Activated CD4-positive, alpha-beta memory T cell treated with anti-CD3 and anti-CD28 coated beads for 36 hours (primary cell): ENCODE measurements at regions of chr2 and their contacts with region 1.

Region 1: DNA sequence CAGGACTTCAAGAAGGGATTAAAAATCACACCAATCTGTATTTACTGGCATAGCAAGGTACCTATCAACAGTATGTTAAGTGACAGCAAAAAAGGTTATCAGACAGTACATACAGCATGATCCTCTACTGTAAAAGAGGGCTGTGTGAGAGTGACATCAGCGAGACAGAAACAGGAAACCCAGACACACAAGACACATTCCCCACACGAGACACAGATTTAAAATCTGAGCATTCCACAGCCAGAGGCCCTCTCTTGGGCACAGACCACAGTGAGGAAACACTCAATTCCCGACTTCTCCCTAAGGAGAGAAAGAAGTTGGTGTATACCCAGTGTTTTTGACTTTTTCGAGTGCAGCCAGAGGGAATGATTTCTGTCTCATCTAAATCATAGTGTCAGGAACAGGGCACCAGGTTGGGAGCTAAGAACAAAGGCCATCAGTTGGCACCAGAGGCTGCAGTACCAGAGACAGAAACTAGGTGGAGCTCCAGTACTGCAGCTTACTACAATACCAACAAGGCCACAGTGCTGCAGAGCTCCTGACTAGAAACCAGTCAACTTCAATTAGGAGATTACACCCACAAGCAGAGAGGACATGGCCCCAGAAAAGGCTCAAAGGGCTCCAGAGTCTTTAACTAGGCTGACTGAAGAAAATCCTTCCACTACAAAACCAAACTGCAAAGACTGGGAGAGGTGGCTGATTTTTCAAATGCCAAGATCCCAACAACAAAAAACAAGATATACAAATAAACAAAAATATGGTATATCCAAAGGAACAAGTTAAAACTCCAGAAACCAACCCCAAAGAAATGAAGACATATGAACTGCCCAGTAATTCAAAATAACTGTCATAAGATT is 41.0 kb downstream of the UNC50 start:
- DNase-seq: peak; percentile 87
- H3K4me3 Mint-ChIP-seq: no peak overlapping the region
- H3K27ac Mint-ChIP-seq: peak overlapping the region; percentile 74
- H3K4me1 Mint-ChIP-seq: peaks cover 52% of the 10 kb centered on the region
- H3K27me3 Mint-ChIP-seq: no peaks in the 10 kb centered on the region

Region 2: GRCh38 chr2:98713332-98714015 is 64.1 kb after region 1 on chr2:
- CTCF ChIA-PET with region 1: interaction called, 11 read pairs
- POLR2A ChIA-PET with region 1: no interaction called
- intact Hi-C with region 1: no loop called
- DNase-seq: no peak
- H3K4me3 Mint-ChIP-seq: no peak overlapping the region
- H3K27ac Mint-ChIP-seq: peak overlapping the region; percentile 24
- H3K4me1 Mint-ChIP-seq: peaks cover 88% of the 10 kb centered on the region
- H3K27me3 Mint-ChIP-seq: no peaks in the 10 kb centered on the region

Region 3: DNA sequence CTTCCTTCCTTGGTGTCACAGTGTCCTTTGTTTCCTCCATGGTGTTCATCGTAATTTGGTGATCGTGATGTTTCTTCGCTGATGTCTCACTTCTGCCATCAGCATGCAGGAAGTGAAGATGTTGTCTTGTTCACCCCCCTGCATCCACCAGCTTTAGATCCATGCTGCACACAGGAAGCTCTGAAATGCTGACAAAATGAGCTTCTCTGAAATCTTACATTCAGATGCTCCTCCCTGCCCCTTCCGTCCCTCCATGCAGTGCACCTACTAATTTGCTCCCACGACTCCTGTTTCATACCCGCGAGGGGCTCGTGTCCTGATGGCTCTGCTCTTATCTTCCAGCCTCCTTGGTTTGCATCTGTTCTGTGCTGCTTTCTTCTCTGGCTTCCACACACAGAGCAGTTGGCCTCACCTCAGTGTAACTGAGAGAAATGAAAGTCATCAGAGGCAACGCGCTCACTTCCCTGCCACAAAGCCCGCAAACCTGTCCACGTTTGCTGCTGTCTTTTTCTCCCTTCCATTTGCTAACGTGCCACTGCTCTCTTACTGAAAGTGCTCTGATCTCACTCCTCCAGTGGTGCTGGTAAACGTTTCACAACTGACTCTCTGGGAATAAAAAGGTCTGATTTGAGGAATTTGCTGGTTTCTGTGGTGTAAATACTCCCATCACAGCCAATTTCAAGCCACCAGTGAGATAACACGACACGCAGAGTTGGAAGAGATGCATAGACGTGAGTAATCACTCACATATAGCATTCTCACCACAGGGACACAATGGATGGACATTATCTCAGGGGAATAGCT is 122.6 kb after region 1 on chr2:
- CTCF ChIA-PET with region 1: interaction called, 8 read pairs
- POLR2A ChIA-PET with region 1: no interaction called
- intact Hi-C with region 1: loop called (anchors 1 kb)
- DNase-seq: peak; percentile 77
- H3K4me3 Mint-ChIP-seq: peak overlapping the region; percentile 92
- H3K27ac Mint-ChIP-seq: peak overlapping the region; percentile 95
- H3K4me1 Mint-ChIP-seq: peaks cover 68% of the 10 kb centered on the region
- H3K27me3 Mint-ChIP-seq: no peaks in the 10 kb centered on the region

Region 4: GRCh38 chr2:98828793-98829371 is 179.5 kb after region 1 on chr2:
- CTCF ChIA-PET with region 1: interaction called, 17 read pairs
- POLR2A ChIA-PET with region 1: interaction called, 3 read pairs
- intact Hi-C with region 1: no loop called
- DNase-seq: peak; percentile 25
- H3K4me3 Mint-ChIP-seq: no peak overlapping the region
- H3K27ac Mint-ChIP-seq: peak overlapping the region; percentile 43
- H3K4me1 Mint-ChIP-seq: peaks cover 47% of the 10 kb centered on the region
- H3K27me3 Mint-ChIP-seq: no peaks in the 10 kb centered on the region

Region 5: GRCh38 chr2:98893911-98894321 is 244.6 kb after region 1 on chr2:
- CTCF ChIA-PET with region 1: interaction called, 10 read pairs
- POLR2A ChIA-PET with region 1: no interaction called
- intact Hi-C with region 1: no loop called
- DNase-seq: no peak
- H3K4me3 Mint-ChIP-seq: no peak overlapping the region
- H3K27ac Mint-ChIP-seq: no peak overlapping the region
- H3K4me1 Mint-ChIP-seq: no peaks in the 10 kb centered on the region
- H3K27me3 Mint-ChIP-seq: peaks cover 1% of the 10 kb centered on the region